ENCODE measurements at regions of chr9 and their contacts with region 1.

Region 1: DNA sequence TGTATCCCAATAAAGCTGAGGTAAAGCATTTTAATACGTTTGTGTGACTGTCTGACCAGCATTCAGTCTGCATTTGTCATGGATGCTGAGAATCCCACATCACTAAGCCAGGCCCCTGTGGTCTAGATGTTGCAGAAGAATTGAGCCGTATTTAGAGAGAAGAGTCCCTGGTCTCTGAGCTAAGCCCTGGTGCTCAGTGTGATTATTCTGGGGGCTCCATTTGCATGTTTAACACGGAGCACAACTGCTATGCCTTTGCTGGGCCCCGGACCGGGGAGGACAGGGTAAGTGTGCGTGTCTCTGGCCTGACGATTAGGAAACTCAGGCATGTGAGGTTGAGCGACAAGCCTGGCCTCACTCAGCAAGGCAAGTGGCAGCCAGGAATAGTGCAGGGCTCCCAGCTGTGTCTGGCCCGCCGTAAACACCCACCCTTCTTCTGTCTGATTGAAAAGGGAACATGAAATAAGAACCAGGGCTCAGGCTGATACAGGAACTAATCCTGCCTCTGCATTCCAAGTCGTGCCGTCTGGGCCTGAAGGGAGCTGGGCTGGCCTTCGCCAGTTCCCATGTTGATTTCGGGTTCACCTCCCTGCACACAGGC is 22.3 kb downstream of the FAM78A start:
- DNase-seq: no peak
- H3K4me3 Mint-ChIP-seq: no peak overlapping the region
- H3K27ac Mint-ChIP-seq: peak overlapping the region; percentile 98
- H3K4me1 Mint-ChIP-seq: peaks cover 68% of the 10 kb centered on the region
- H3K27me3 Mint-ChIP-seq: no peaks in the 10 kb centered on the region

Region 2: GRCh38 chr9:131237931-131238401 is 16.0 kb before region 1 on chr9:
- CTCF ChIA-PET with region 1: interaction called, 7 read pairs
- POLR2A ChIA-PET with region 1: interaction called, 31 read pairs
- DNase-seq: peak; percentile 91
- H3K4me3 Mint-ChIP-seq: peak overlapping the region; percentile 59
- H3K27ac Mint-ChIP-seq: peak overlapping the region; percentile 95
- H3K4me1 Mint-ChIP-seq: peaks cover 49% of the 10 kb centered on the region
- H3K27me3 Mint-ChIP-seq: no peaks in the 10 kb centered on the region